Dorsolateral prefrontal cortex (tissue), 120 donors: ENCODE measurements at regions of chr9 and their contacts with region 1.

Region 1: GRCh38 chr9:115694014-115694413 is 459.6 kb upstream of the PAPPA start:
- DNase-seq: no peak
- H3K4me3 ChIP-seq: no peak overlapping the region
- H3K27ac ChIP-seq: no peak overlapping the region
- H3K27me3 ChIP-seq: peaks cover 0 to 7% (median 0%) of the 10 kb centered on the region in 45 donors
- CTCF ChIP-seq: peak in 22 of 56 donors; percentile 7 to 44 (median 29)

Region 2: DNA sequence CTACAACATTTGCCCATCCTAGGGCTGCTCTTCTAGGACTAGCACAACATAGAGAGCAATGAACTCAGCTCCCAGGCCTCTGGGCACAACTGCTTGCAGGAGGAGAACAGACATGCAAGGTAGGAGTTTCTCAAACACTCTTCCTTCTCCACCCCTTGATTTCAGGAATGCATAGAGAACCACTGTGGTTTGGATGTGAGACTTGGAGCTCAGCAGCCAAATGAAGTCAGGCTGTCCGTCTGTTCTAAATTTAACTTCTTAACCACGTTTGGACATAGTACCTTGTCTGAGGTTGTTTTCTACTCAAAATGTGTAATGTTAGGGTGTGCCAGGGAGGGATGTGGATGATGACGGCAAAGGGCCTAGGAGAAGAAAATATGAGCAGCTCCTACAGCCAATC is 60.9 kb before region 1 on chr9:
- intact Hi-C with region 1: loop called in 1 of 2 experiments (anchors 10 kb)
- DNase-seq: no peak
- H3K4me3 ChIP-seq: no peak overlapping the region
- H3K27ac ChIP-seq: no peak overlapping the region
- H3K27me3 ChIP-seq: peaks cover 0 to 8% (median 0%) of the 10 kb centered on the region in 45 donors
- CTCF ChIP-seq: no peak